ENCODE measurements at regions of chr17 and their contacts with region 1.

Region 1: DNA sequence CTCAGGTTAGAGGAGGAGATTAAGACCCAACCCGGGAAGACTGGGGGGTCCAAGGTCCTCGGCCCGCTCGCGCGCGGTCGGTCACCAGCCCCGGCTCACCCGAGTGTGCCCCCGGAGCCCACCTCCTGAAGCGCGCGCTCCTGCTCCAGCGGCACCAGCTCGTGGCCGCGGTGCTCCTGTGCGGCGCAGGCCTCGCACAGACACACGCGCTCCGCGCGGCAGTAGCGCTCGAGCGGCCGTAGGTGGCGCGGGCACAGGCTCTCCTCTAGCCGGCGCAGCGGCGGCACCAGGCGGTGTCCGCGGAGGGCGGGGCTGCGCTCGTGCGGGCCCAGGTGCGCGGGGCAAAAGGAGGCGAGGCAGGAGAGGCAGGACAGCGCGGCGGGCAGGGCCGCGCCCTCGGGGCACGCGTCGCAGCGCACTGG is 618 bp downstream of the TRIM47 start:
- DNase-seq: no peak
- H3K4me3 ChIP-seq: peak overlapping the region; percentile 31
- H3K27me3 ChIP-seq: peaks cover 2% of the 10 kb centered on the region; the same call in 1 of the 2 replicates
- CTCF ChIP-seq: peak; percentile 35

Region 2: GRCh38 chr17:75808905-75809715 is 68.7 kb before region 1 on chr17:
- CTCF ChIA-PET with region 1: no interaction called
- POLR2A ChIA-PET with region 1: no interaction called
- DNase-seq: no peak
- H3K4me3 ChIP-seq: no peak overlapping the region
- H3K27me3 ChIP-seq: no peaks in the 10 kb centered on the region
- CTCF ChIP-seq: no peak

Region 3: DNA sequence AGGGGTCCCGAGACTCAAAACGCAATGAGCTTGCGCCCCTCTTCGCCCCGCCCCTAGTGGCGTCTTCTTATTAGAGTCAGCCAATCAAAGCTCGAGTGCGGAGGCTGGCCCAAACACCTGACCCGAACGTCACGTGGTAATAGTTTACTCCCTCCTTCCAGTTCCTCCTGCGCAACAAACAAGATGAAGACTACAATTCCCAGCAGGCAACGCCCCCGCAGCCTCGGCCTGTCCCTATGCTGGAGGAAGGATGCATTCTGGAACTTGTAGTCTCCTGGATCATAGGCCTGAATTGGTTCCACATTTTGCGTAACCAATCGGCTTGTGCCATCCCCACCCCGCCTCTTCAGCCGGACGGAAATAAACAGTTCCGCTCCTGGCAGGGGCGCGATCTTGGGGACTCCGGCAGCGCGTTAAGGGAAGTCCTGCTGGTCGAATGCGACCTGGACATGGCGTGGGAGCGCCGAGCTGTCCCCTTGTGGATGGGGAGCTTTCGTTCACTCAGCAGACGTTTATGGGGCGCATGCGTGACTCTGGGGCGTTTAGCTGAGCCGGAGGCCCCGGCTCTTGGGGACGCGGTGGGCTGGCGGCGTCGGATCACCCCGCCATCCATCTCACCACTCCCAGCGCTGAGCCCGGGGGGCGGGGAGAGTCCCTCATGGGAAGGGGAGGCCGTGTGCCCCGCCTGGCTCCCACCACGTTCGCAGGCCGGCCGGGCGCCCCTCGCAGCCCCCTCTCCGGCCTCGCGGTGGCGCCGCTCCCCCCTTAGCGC is 22.3 kb before region 1 on chr17 and contains the start of gene WBP2:
- CTCF ChIA-PET with region 1: interaction called, 34 read pairs
- POLR2A ChIA-PET with region 1: no interaction called
- DNase-seq: peak; percentile 100
- H3K4me3 ChIP-seq: peak within 1 kb of the TSS; percentile 79
- H3K27me3 ChIP-seq: no peaks in the 10 kb centered on the region
- CTCF ChIP-seq: peak; percentile 17; the same call in 1 of the 2 replicates
- polyA plus RNA-seq, gene WBP2: 28.5 and 37.0 TPM in 2 replicates

Region 4: GRCh38 chr17:75888511-75888910 is 10.7 kb after region 1 on chr17:
- CTCF ChIA-PET with region 1: interaction called, 58 read pairs
- POLR2A ChIA-PET with region 1: no interaction called
- DNase-seq: no peak
- H3K4me3 ChIP-seq: no peak overlapping the region
- H3K27me3 ChIP-seq: no peaks in the 10 kb centered on the region
- CTCF ChIP-seq: no peak

Region 5: GRCh38 chr17:75896415-75897159 is 18.8 kb after region 1 on chr17 and contains the start of gene TRIM65:
- CTCF ChIA-PET with region 1: interaction called, 58 read pairs
- POLR2A ChIA-PET with region 1: no interaction called
- DNase-seq: no peak
- H3K4me3 ChIP-seq: peak within 1 kb of the TSS; percentile 52
- H3K27me3 ChIP-seq: no peaks in the 10 kb centered on the region
- CTCF ChIP-seq: peak; percentile 40
- polyA plus RNA-seq, gene TRIM65: 5.5 and 8.6 TPM in 2 replicates

Region 6: DNA sequence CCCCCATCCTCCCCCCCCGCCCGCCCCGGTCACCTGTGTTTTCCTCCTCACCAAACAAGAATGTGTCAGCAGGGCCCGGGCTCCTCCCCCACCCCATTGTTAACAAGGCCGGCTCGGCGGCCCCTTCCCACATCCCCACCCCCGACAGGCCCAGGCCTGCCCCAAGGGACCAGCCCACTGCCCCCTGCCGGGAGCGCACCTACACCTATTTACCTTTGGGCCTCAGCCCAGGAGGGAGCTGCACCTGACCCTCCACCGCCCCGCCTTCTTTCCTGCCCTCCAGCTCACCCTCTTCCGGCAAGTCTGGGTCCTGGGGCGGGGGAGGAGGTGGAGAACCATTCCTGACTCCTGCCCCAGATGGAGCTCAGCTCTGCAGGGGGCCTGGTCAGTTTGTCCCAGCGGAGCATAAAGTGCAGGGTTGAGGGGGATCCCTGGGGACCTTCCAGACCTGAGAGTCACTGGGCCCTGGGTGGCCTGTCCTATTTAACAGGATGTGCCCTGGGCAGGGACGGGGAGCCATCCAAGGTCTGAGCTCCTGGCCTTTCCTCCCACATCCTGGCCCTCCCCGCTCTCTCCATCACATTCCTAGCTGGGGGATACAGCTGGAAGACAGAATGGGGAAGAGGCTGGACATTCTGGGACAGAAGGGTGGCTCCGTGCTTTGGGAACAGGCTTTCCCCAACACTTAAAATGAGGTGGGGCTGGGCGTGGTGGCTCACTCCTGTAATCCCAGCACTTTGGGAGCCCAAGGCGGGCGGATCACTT is 255.0 kb after region 1 on chr17:
- CTCF ChIA-PET with region 1: no interaction called
- POLR2A ChIA-PET with region 1: no interaction called
- DNase-seq: no peak
- H3K4me3 ChIP-seq: no peak overlapping the region
- H3K27me3 ChIP-seq: peaks cover 9% of the 10 kb centered on the region
- CTCF ChIP-seq: no peak

Measured in BJ (cell line).